ENCODE measurements at regions of chr9 and their contacts with region 1.

Region 1: GRCh38 chr9:134163353-134164196 is 789 bp downstream of the RNU6ATAC start:
- DNase-seq: peak; percentile 78
- H3K4me3 Mint-ChIP-seq: peak overlapping the region; percentile 27
- H3K27ac Mint-ChIP-seq: no peak overlapping the region
- H3K4me1 Mint-ChIP-seq: peaks cover 14% of the 10 kb centered on the region
- H3K27me3 Mint-ChIP-seq: no peaks in the 10 kb centered on the region

Region 2: GRCh38 chr9:134024828-134025605 is 138.6 kb before region 1 on chr9 and contains the start of gene BRD3OS:
- CTCF ChIA-PET with region 1: interaction called, 3 read pairs
- intact Hi-C with region 1: loop called (anchors 1 kb)
- DNase-seq: peak; percentile 93
- H3K4me3 Mint-ChIP-seq: peak within 1 kb of the TSS; percentile 77
- H3K27ac Mint-ChIP-seq: no peak within 1 kb of the TSS
- H3K4me1 Mint-ChIP-seq: peaks cover 11% of the 10 kb centered on the region
- H3K27me3 Mint-ChIP-seq: no peaks in the 10 kb centered on the region
- total RNA-seq, gene BRD3OS: 6.3 to 6.7 TPM

Region 3: DNA sequence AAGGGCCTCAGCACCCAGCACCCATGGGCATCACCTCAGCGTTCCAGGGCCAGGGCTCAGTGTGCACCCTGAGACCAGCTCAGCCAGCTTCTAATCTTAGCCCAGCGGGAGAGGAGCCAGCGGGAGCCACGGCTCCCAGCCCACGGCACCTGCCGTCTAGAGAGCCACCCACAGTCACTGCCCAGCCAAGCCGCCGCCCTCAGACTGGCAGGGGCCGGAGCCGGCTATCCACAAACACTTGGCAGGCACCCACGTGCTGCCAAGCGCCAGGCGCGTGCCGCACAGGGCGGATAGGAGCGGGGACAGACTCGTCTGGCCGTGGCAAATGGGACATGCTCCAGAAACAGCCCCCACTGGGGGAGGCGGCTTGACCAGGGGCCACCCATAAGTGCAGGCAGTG is 114.3 kb before region 1 on chr9:
- CTCF ChIA-PET with region 1: no interaction called
- intact Hi-C with region 1: no loop called
- DNase-seq: no peak
- H3K4me3 Mint-ChIP-seq: no peak overlapping the region
- H3K27ac Mint-ChIP-seq: no peak overlapping the region
- H3K4me1 Mint-ChIP-seq: no peaks in the 10 kb centered on the region
- H3K27me3 Mint-ChIP-seq: no peaks in the 10 kb centered on the region

Region 4: GRCh38 chr9:134135343-134136118 is 28.0 kb before region 1 on chr9 and contains the start of gene WDR5:
- CTCF ChIA-PET with region 1: interaction called, 7 read pairs
- intact Hi-C with region 1: loop called (anchors 1 kb)
- DNase-seq: peak; percentile 92
- H3K4me3 Mint-ChIP-seq: peak within 1 kb of the TSS; percentile 86
- H3K27ac Mint-ChIP-seq: peak within 1 kb of the TSS; percentile 92
- H3K4me1 Mint-ChIP-seq: peaks cover 37% of the 10 kb centered on the region
- H3K27me3 Mint-ChIP-seq: no peaks in the 10 kb centered on the region
- total RNA-seq, gene WDR5: 39.4 to 40.4 TPM

Region 5: DNA sequence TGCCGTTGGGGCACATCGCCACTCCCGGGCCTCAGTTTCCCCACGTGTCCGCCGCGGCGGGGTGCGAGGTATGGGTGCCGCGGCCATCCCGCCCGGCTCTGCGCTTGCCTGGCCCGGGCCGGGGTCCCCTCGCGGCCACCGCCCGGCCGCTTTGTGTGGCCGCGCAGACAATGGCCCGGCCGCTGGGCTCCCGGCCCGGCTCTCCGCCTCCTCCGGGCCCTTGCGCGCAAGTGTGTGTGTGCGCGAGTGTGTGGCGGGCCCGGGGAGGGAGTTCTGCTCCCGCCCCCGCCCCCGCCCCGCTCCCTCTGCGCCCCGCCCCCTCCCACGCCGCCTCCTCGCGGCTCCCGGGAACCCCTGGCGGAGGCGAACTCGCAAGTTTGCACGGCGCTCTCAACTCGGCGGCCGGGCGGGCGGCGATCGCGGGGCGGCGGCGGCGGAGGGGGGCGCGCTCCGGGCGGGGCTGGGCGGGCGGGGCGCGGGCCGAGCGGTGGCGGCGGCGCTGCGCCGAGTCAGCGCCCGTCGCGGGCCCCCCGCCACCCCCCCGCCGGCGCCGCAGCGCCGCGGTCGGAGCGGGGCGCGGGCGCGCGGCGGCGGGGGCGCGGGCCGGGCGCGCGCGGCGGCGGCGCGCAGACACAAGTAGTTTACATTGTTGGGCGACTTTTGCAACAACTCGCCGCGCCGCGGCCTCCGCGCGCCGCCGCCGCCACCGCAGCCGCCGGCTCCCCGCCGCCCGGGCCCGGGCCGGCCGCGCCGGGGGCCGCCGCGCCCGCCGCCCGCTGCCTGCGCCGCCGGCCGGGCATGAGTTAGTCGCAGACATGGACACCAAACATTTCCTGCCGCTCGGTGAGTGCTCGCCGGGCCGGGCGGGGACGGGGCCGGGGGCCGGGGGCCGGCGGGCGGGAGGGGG is 162.5 kb after region 1 on chr9 and contains the start of gene RXRA:
- CTCF ChIA-PET with region 1: no interaction called
- intact Hi-C with region 1: loop called (anchors 10 kb)
- DNase-seq: peak; percentile 37
- H3K4me3 Mint-ChIP-seq: peak within 1 kb of the TSS; percentile 54
- H3K27ac Mint-ChIP-seq: no peak within 1 kb of the TSS
- H3K4me1 Mint-ChIP-seq: peaks cover 5% of the 10 kb centered on the region
- H3K27me3 Mint-ChIP-seq: peaks cover 7% of the 10 kb centered on the region
- total RNA-seq, gene RXRA: 2.1 to 2.2 TPM